ENCODE measurements at regions of chr1 and their contacts with region 1.

Region 1: GRCh38 chr1:224113918-224114786 is at the start of gene FBXO28:
- DNase-seq: peak; percentile 97
- H3K4me3 Mint-ChIP-seq: peak within 1 kb of the TSS; percentile 78
- H3K27ac Mint-ChIP-seq: peak within 1 kb of the TSS; percentile 86
- H3K4me1 Mint-ChIP-seq: peaks cover 27% of the 10 kb centered on the region
- H3K27me3 Mint-ChIP-seq: no peaks in the 10 kb centered on the region
- total RNA-seq, gene FBXO28: 19.5 to 20.0 TPM

Region 2: GRCh38 chr1:224067621-224068457 is 46.3 kb before region 1 on chr1:
- CTCF ChIA-PET with region 1: no interaction called
- POLR2A ChIA-PET with region 1: no interaction called
- intact Hi-C with region 1: no loop called
- DNase-seq: peak; percentile 11
- H3K4me3 Mint-ChIP-seq: no peak overlapping the region
- H3K27ac Mint-ChIP-seq: no peak overlapping the region
- H3K4me1 Mint-ChIP-seq: peaks cover 12% of the 10 kb centered on the region
- H3K27me3 Mint-ChIP-seq: peaks cover 1% of the 10 kb centered on the region

Region 3: DNA sequence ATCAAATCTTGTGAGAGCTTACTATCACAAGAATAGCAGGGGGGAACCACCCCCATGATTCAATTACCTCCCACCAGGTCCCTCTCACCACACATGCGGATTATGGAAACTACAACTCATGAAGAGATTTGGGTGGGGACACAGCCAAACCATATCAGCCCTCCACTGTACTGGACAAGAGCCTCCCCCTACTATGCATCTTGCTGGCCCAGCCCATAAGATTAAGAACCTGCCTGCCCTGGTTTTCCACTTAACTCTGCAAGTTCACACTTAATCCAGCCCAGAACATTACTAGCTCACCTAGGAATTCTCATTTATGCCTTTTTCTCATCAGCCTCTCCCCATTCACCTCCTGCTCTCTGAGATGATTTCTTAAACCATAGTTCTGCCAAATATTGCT is 18.3 kb before region 1 on chr1:
- CTCF ChIA-PET with region 1: no interaction called
- POLR2A ChIA-PET with region 1: no interaction called
- intact Hi-C with region 1: no loop called
- DNase-seq: no peak
- H3K4me3 Mint-ChIP-seq: no peak overlapping the region
- H3K27ac Mint-ChIP-seq: no peak overlapping the region
- H3K4me1 Mint-ChIP-seq: no peaks in the 10 kb centered on the region
- H3K27me3 Mint-ChIP-seq: peaks cover 9% of the 10 kb centered on the region

Region 4: DNA sequence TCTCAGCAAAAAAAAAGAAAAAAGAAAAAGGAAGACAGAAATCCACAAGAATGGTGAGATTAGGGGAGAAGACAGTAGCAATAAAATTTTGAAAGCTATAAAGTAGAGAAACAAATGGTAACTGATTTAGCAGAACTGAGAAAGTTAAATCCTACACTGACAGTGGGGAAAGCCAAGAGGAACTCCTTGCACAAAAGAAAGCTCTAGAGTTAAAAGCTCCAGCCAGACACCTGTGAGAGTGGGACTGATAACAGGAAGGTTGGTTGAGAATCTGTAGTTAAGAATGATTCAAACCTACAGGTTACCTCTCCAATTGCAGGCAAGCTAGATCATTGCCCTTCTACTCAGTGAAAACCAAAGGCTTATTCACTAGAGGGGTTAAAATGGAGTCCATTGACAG is 23.4 kb after region 1 on chr1:
- CTCF ChIA-PET with region 1: interaction called, 13 read pairs
- POLR2A ChIA-PET with region 1: no interaction called
- intact Hi-C with region 1: no loop called
- DNase-seq: no peak
- H3K4me3 Mint-ChIP-seq: no peak overlapping the region
- H3K27ac Mint-ChIP-seq: no peak overlapping the region
- H3K4me1 Mint-ChIP-seq: no peaks in the 10 kb centered on the region
- H3K27me3 Mint-ChIP-seq: no peaks in the 10 kb centered on the region

Region 5: DNA sequence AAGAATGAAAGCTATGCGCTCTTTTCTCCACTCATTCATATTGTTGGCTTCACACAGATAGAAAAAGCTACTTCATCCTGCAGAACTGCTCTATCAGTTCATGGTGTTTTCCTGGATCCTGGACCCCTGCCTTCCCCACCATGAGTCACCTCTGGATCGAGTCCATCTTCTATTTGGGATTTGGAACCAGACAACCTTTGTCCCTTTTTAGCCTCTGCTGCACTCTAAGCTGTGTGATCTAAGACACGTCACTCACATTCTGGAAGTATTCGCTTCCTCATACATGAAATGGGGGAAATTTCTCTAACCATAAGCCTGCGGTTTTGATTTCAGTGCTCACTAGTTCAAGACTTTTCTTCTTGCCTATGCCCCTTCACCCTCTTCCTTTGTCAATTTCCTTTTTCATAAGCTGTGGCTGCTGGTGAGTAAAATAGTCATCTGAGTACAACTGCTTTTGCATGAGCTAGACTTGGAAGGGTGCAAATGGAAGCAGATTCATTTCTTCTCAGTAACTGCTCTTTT is 54.8 kb after region 1 on chr1:
- CTCF ChIA-PET with region 1: interaction called, 3 read pairs
- POLR2A ChIA-PET with region 1: no interaction called
- intact Hi-C with region 1: loop called (anchors 1 kb)
- DNase-seq: peak; percentile 22
- H3K4me3 Mint-ChIP-seq: peak overlapping the region; percentile 17
- H3K27ac Mint-ChIP-seq: peak overlapping the region; percentile 50
- H3K4me1 Mint-ChIP-seq: peaks cover 30% of the 10 kb centered on the region
- H3K27me3 Mint-ChIP-seq: no peaks in the 10 kb centered on the region

Region 6: DNA sequence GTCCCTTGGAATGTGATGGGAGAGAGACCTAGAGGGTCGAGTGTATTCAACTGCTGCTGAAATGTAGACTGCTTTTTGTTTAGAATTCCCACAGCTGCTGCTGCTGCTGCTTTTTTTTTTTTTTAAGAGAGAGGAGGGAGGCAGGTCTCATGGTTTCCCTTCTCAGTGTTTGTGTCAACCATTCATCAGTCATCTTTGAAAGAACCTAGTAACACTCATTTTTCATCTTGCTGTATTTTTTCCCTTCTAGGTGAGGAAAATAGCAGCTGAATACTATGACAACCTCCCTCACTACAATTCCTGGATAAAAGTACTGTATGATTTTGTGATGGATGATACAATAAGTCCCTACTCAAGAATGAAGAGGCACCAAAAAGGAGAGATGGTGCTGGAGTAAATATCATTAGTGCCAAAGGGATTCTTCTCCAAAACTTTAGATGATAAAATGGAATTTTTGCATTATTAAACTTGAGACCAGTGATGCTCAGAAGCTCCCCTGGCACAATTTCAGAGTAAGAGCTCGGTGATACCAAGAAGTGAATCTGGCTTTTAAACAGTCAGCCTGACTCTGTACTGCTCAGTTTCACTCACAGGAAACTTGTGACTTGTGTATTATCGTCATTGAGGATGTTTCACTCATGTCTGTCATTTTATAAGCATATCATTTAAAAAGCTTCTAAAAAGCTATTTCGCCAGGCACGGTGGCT is 78.1 kb after region 1 on chr1:
- CTCF ChIA-PET with region 1: interaction called, 16 read pairs
- POLR2A ChIA-PET with region 1: no interaction called
- intact Hi-C with region 1: no loop called
- DNase-seq: peak; percentile 39
- H3K4me3 Mint-ChIP-seq: no peak overlapping the region
- H3K27ac Mint-ChIP-seq: peak overlapping the region; percentile 92
- H3K4me1 Mint-ChIP-seq: peaks cover 37% of the 10 kb centered on the region
- H3K27me3 Mint-ChIP-seq: no peaks in the 10 kb centered on the region

Region 7: GRCh38 chr1:224356685-224357625 is 242.8 kb after region 1 on chr1 and contains the start of gene CNIH4:
- CTCF ChIA-PET with region 1: interaction called, 4 read pairs
- POLR2A ChIA-PET with region 1: no interaction called
- intact Hi-C with region 1: loop called (anchors 1 kb)
- DNase-seq: peak; percentile 94
- H3K4me3 Mint-ChIP-seq: peak within 1 kb of the TSS; percentile 90
- H3K27ac Mint-ChIP-seq: peak within 1 kb of the TSS; percentile 88
- H3K4me1 Mint-ChIP-seq: peaks cover 27% of the 10 kb centered on the region
- H3K27me3 Mint-ChIP-seq: no peaks in the 10 kb centered on the region
- total RNA-seq, gene CNIH4: 48.3 to 51.6 TPM

Region 8: DNA sequence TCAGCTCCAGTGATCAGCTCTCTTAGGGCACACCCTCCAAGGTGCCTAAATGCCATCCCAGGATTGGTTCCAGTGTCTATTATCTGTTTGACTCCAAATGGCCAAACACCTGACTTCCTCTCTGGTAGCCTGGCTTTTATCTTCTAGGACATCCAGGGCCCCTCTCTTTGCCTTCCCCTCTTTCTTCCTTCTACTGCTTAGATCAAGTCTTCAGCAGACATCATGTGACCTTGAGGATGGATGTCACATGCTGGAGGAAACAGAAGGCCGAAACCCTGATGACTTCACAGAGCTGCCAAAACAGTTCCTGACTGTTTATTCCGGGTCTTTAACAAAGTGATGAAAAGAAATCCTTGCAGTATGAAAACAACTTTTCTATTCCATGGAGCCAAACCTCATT is 344.8 kb after region 1 on chr1:
- CTCF ChIA-PET with region 1: interaction called, 17 read pairs
- POLR2A ChIA-PET with region 1: no interaction called
- intact Hi-C with region 1: loop called (anchors 1 kb)
- DNase-seq: no peak
- H3K4me3 Mint-ChIP-seq: no peak overlapping the region
- H3K27ac Mint-ChIP-seq: no peak overlapping the region
- H3K4me1 Mint-ChIP-seq: peaks cover 12% of the 10 kb centered on the region
- H3K27me3 Mint-ChIP-seq: no peaks in the 10 kb centered on the region